Gastrocnemius medialis (tissue), 4 donors: ENCODE measurements at regions of chr7 and their contacts with region 1.

Region 1: DNA sequence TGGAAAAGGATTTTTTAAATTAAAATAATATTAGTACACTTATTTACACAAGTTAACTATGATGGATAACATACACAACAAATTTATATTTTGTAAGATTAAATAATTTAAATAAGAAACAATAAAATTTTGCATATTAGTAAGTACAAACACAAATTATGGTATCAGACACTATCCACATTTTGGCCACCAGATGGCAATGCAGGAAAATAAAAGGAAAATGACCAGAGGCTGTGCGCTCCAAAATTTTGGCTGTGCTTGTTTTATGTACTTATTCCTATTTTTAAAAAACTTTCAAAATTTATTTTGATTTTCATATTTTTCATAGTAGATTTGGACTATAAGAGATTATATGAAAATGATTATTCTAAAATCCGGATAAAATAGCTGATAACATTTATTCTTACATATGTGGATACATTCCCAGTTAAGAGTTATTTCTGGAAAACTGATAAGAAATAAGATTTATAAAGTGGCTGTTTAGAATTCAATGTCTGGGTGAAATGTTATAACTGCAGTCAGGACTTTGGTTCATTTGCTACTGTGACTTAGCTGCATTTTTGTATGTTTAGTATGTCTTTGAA is 274.7 kb upstream of the HGF start:
- DNase-seq: peak in 1 of 2 donors; percentile 20
- ATAC-seq: peak; percentile 45 to 70
- H3K4me3 ChIP-seq: no peak overlapping the region
- H3K27ac ChIP-seq: no peak overlapping the region
- H3K4me1 ChIP-seq: no peaks in the 10 kb centered on the region
- H3K27me3 ChIP-seq: no peaks in the 10 kb centered on the region
- CTCF ChIP-seq: peak; percentile 62 to 74 (median 68)
- POLR2A ChIP-seq: no peak

Region 2: GRCh38 chr7:81780914-81781693 is 263.5 kb before region 1 on chr7:
- in situ Hi-C with region 1: no loop called
- intact Hi-C with region 1: no loop called
- DNase-seq: no peak
- ATAC-seq: no peak
- H3K4me3 ChIP-seq: no peak overlapping the region
- H3K27ac ChIP-seq: no peak overlapping the region
- H3K4me1 ChIP-seq: no peaks in the 10 kb centered on the region
- H3K27me3 ChIP-seq: no peaks in the 10 kb centered on the region
- CTCF ChIP-seq: no peak
- POLR2A ChIP-seq: no peak

Region 3: DNA sequence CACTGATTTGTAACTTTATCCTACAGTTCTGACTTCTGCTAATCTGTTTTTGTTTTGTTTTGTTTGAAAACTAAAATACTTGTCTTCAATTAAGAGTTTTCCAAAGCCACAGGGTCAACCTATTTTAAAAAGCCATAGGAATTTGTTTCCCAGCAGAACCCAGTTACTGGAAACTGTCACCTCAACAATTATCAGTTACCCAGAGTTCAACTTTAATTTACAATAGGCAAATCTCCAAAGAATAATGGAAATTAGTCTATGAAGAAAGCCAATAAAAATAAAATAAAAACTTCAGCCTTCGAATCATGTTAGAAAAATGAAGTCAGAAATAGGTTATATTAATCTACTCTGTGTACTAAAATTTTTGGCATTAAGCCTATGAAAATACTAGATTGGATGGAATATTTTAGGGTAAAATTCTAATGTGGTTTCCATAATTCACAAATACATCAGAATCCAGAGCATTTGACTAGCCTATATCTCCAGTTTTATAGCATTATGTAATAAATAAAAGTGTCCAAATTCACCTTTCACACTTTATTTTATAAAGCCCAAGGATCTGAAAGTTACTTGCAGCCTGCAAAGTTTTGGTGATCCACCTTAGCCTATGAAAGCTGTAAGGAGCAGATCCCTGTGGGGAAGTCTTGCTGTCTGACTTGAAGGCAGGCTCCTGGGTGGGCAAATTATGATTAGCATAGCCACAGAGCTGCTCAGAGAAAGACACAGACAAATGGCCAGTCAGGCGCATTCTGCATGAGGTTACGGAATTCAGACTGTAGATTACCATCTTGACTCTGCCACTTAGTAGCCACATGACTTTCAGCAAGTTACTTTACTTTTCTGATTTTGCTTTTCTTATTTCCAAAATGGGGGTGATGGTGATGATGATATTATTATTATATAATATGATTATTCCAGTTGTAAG is 24.8 kb before region 1 on chr7:
- in situ Hi-C with region 1: no loop called
- intact Hi-C with region 1: no loop called
- DNase-seq: no peak
- ATAC-seq: no peak
- H3K4me3 ChIP-seq: no peak overlapping the region
- H3K27ac ChIP-seq: no peak overlapping the region
- H3K4me1 ChIP-seq: peaks cover 6% of the 10 kb centered on the region in 2 donors
- H3K27me3 ChIP-seq: no peaks in the 10 kb centered on the region
- CTCF ChIP-seq: no peak
- POLR2A ChIP-seq: no peak

Region 4: GRCh38 chr7:82481499-82482097 is 437.0 kb after region 1 on chr7:
- in situ Hi-C with region 1: loop called in 2 of 4 experiments (anchors 25 kb)
- intact Hi-C with region 1: loop called (anchors 5 kb)
- DNase-seq: no peak
- ATAC-seq: no peak
- H3K4me3 ChIP-seq: no peak overlapping the region
- H3K27ac ChIP-seq: no peak overlapping the region
- H3K4me1 ChIP-seq: peaks cover 22 to 24% of the 10 kb centered on the region in 2 donors
- H3K27me3 ChIP-seq: no peaks in the 10 kb centered on the region
- CTCF ChIP-seq: peak; percentile 48 to 87 (median 77)
- POLR2A ChIP-seq: no peak

Region 5: DNA sequence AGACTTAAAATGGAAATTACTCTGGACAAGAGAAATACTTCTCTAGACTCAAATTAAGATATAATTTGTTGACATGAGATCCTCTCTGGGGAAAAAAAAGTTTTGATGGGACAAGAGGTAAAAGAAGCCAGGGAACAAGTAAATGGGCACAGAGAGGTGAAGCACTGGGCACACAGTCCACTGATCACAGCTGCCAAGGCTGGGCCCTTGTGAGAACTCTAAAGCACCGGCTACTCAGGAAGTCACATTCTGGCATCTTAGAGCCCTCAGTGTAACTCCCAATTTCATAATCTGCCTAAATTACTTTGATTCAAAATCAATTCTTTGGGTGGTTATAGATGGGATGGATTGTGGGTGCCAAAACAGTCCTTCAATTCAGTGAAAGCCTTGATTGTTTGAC is 522.2 kb after region 1 on chr7:
- in situ Hi-C with region 1: loop called (anchors 5 to 10 kb)
- intact Hi-C with region 1: no loop called
- DNase-seq: no peak
- ATAC-seq: no peak
- H3K4me3 ChIP-seq: no peak overlapping the region
- H3K27ac ChIP-seq: no peak overlapping the region
- H3K4me1 ChIP-seq: peaks cover 5 to 14% of the 10 kb centered on the region in 2 donors
- H3K27me3 ChIP-seq: no peaks in the 10 kb centered on the region
- CTCF ChIP-seq: no peak
- POLR2A ChIP-seq: no peak

Region 6: DNA sequence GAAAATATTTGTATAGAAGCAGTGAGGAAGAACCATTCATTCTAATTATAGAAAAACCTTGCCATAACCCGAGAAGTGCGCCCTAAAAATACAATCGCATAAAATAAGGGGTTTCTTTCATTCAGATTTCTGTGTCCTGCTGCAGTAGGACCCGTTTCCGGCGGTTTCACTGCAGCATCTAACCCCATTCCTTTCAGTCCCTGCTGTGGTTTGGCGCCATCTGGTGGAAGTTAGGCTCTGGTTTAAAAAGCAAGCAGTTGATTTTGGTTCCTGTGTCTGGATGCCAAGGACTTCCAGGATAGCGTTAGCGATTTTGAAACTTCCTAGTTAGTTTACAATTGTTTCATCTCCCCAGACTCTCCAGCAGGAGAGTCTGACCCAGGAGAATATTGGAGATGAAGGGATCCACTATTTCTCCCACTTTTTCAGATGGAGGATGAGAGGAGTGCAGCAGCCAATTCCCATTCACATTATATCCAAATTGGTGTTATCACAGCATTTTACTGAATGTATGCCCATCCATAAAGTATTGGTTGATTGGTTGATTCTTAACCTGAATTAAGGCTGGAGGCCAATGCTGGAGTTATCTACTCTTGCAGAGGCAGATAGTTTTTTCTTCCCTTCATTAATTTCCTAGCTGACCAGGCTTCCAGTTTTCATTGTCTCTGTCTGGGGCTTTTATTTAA is 527.7 kb after region 1 on chr7:
- in situ Hi-C with region 1: loop called (anchors 5 to 10 kb)
- intact Hi-C with region 1: loop called (anchors 1 kb)
- DNase-seq: peak; percentile 61 to 74
- ATAC-seq: peak; percentile 88 to 93
- H3K4me3 ChIP-seq: peak overlapping the region in 2 of 4 donors; percentile 19 to 24
- H3K27ac ChIP-seq: no peak overlapping the region
- H3K4me1 ChIP-seq: peaks cover 0 to 11% of the 10 kb centered on the region in 2 donors
- H3K27me3 ChIP-seq: no peaks in the 10 kb centered on the region
- CTCF ChIP-seq: peak; percentile 83 to 94 (median 87)
- POLR2A ChIP-seq: no peak

Region 7: GRCh38 chr7:82605247-82605872 is 560.8 kb after region 1 on chr7:
- in situ Hi-C with region 1: no loop called
- intact Hi-C with region 1: loop called (anchors 10 kb)
- DNase-seq: no peak
- ATAC-seq: no peak
- H3K4me3 ChIP-seq: no peak overlapping the region
- H3K27ac ChIP-seq: no peak overlapping the region
- H3K4me1 ChIP-seq: no peaks in the 10 kb centered on the region
- H3K27me3 ChIP-seq: no peaks in the 10 kb centered on the region
- CTCF ChIP-seq: peak; percentile 41 to 67 (median 57)
- POLR2A ChIP-seq: no peak